Activated CD4-positive, alpha-beta memory T cell treated with anti-CD3 and anti-CD28 coated beads for 36 hours (primary cell): ENCODE measurements at regions of chr3 and their contacts with region 1.

Region 1: DNA sequence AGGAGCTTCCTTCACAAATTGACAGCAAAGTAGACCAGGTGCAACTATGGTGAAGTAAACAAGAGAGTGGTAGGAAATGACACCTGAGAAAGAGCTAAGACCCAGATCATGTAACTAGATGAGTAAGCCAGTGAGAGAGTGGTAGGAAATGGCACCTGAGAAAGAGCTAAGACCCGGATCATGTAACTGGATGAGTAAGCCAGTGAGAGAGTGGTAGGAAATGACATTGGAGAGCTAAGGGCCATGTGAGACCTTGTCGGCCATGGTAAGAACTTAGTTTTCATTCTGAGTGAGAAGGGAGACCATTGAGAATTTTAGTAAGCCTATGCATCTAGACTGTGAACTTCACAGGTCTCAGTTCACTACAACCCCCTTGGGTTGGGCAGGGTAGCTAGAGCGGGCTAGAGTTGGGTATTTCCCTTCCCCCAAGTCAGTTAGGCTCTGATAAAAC is 5.4 kb upstream of the SENP7 start:
- DNase-seq: peak; percentile 69
- H3K4me3 Mint-ChIP-seq: peak overlapping the region; percentile 65
- H3K27ac Mint-ChIP-seq: peak overlapping the region; percentile 93
- H3K4me1 Mint-ChIP-seq: peaks cover 48% of the 10 kb centered on the region
- H3K27me3 Mint-ChIP-seq: no peaks in the 10 kb centered on the region

Region 2: DNA sequence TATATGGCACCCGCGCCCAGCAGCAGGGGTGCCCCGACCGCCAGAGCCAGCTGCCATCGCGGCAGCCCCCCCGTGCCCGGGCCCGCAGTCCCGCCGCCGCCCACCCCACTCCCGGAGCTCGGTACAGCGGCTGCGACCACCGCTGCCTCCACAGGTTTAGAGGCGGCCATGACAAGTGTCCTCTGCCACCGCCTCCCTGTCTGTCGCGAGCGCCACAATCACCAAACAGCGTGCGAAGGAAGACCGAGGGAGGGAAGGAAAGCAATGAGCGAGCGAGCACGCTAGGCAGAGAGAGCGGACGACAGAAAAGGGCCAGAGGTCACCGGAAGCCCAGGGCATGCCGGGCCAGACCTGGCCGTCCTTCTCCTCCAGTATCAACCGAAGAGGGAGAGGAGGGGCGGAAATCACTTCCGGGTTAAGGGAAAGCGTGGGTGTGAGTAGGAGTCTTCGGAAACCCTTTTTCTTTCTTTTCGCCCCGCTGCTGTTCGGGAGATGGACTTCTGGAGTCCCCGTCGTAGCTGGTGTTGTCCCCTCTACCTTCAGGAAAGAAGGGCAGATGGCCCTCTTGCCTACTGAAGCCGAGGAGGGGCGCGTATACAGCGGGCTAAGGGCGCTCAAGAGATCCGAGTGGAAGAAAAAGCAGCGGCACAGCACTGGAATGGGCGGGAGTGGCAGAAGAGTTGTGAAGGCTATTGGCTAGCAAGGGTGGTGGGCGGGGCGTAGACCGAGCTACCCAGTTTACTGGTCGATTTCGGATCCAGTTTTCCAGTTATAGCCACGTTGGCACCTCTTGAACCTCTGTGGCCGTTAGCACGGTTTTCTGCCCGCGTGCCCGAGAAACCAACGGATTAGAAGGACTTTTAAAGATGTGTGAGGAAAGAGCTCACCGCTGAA is 1117.4 kb before region 1 on chr3 and contains the starts of genes LNP1 and TOMM70:
- CTCF ChIA-PET with region 1: no interaction called
- POLR2A ChIA-PET with region 1: no interaction called
- intact Hi-C with region 1: loop called (anchors 5 kb)
- DNase-seq: peak; percentile 97
- H3K4me3 Mint-ChIP-seq: peak within 1 kb of the TSS; percentile 92
- H3K27ac Mint-ChIP-seq: peak within 1 kb of the TSS; percentile 94
- H3K4me1 Mint-ChIP-seq: peaks cover 62% of the 10 kb centered on the region
- H3K27me3 Mint-ChIP-seq: no peaks in the 10 kb centered on the region
- total RNA-seq, gene LNP1: 1.9 to 2.3 TPM
- total RNA-seq, gene TOMM70: 44.9 to 47.1 TPM

Region 3: GRCh38 chr3:101466465-101467309 is 51.8 kb before region 1 on chr3:
- CTCF ChIA-PET with region 1: no interaction called
- POLR2A ChIA-PET with region 1: interaction called, 5 read pairs
- intact Hi-C with region 1: loop called (anchors 2 kb)
- DNase-seq: peak; percentile 86
- H3K4me3 Mint-ChIP-seq: peak overlapping the region; percentile 74
- H3K27ac Mint-ChIP-seq: peak overlapping the region; percentile 84
- H3K4me1 Mint-ChIP-seq: peaks cover 51% of the 10 kb centered on the region
- H3K27me3 Mint-ChIP-seq: no peaks in the 10 kb centered on the region

Region 4: GRCh38 chr3:101561630-101562328 is 43.3 kb after region 1 on chr3 and contains the start of gene TRMT10C:
- CTCF ChIA-PET with region 1: interaction called, 4 read pairs
- POLR2A ChIA-PET with region 1: interaction called, 18 read pairs
- intact Hi-C with region 1: loop called (anchors 1 kb)
- DNase-seq: peak; percentile 96
- H3K4me3 Mint-ChIP-seq: peak within 1 kb of the TSS; percentile 97
- H3K27ac Mint-ChIP-seq: peak within 1 kb of the TSS; percentile 96
- H3K4me1 Mint-ChIP-seq: peaks cover 37% of the 10 kb centered on the region
- H3K27me3 Mint-ChIP-seq: peaks cover 3% of the 10 kb centered on the region
- total RNA-seq, gene TRMT10C: 39.5 to 43.2 TPM

Region 5: GRCh38 chr3:101676765-101677435 is 158.5 kb after region 1 on chr3 and contains the start of gene ZBTB11:
- CTCF ChIA-PET with region 1: no interaction called
- POLR2A ChIA-PET with region 1: no interaction called
- intact Hi-C with region 1: loop called (anchors 1 kb)
- DNase-seq: peak; percentile 100
- H3K4me3 Mint-ChIP-seq: peak within 1 kb of the TSS; percentile 93
- H3K27ac Mint-ChIP-seq: peak within 1 kb of the TSS; percentile 91
- H3K4me1 Mint-ChIP-seq: peaks cover 57% of the 10 kb centered on the region
- H3K27me3 Mint-ChIP-seq: no peaks in the 10 kb centered on the region
- total RNA-seq, gene ZBTB11: 28.0 to 30.3 TPM

Region 6: DNA sequence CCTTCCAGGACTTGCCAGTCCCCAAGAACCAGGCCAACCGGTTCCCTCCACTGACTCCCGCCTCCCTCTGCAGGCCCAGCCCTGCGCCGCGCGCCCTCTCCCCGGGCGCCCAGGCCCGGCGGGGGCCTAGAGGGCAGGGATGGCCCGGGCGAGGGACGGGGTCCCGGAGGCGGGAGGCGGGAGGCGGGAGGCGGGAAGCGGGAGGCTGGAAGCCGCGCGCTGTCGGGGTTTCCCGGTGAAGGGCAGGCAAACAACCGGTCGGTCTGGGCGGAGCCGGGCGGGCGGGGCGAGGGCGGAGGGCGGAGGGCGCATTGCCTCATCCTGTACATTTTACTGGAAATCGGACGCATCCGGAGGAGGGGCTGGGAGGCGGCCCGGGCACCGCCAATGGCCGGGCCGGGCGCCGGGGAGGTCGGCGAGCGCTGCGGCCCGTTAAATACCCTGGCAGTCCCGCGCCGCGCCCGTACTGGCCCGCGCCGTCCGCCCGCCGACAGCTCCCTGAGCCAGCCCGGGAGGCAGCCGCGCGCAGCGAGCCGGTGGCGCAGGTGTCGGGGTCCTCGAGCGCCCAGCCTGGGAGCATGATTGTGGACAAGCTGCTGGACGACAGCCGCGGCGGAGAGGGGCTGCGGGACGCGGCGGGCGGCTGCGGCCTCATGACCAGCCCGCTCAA is 330.7 kb after region 1 on chr3 and contains the start of gene NFKBIZ:
- CTCF ChIA-PET with region 1: no interaction called
- POLR2A ChIA-PET with region 1: no interaction called
- intact Hi-C with region 1: loop called (anchors 2 kb)
- DNase-seq: peak; percentile 97
- H3K4me3 Mint-ChIP-seq: peak within 1 kb of the TSS; percentile 92
- H3K27ac Mint-ChIP-seq: peak within 1 kb of the TSS; percentile 99
- H3K4me1 Mint-ChIP-seq: peaks cover 45% of the 10 kb centered on the region
- H3K27me3 Mint-ChIP-seq: no peaks in the 10 kb centered on the region
- total RNA-seq, gene NFKBIZ: 65.9 to 74.9 TPM